ENCODE measurements at regions of chr22 and their contacts with region 1.

Region 1: GRCh38 chr22:19568337-19569275 is 44.4 kb upstream of the CLDN5 start:
- DNase-seq: peak in 2 of 4 experiments; percentile 25 to 33
- ATAC-seq: no peak
- H3K4me3 ChIP-seq: no peak overlapping the region
- H3K27ac ChIP-seq: no peak overlapping the region
- H3K4me1 ChIP-seq: peaks cover 0 to 8% of the 10 kb centered on the region in 2 experiments; a peak in 2 of 5 replicates
- H3K27me3 ChIP-seq: peaks cover 68 to 69% of the 10 kb centered on the region in 2 experiments
- CTCF ChIP-seq: no peak
- EP300 ChIP-seq: no peak
- POLR2A ChIP-seq: no peak
- RAD21 ChIP-seq: no peak

Region 2: GRCh38 chr22:19463496-19464469 is 104.8 kb before region 1 on chr22:
- CTCF ChIA-PET with region 1: no interaction called
- POLR2A ChIA-PET with region 1: no interaction called
- in situ Hi-C with region 1: no loop called
- intact Hi-C with region 1: no loop called
- DNase-seq: peak in 1 of 4 experiments; percentile 50
- ATAC-seq: peak; percentile 21
- H3K4me3 ChIP-seq: no peak overlapping the region
- H3K27ac ChIP-seq: no peak overlapping the region
- H3K4me1 ChIP-seq: no peaks in the 10 kb centered on the region
- H3K27me3 ChIP-seq: no peaks in the 10 kb centered on the region
- CTCF ChIP-seq: no peak
- EP300 ChIP-seq: no peak
- POLR2A ChIP-seq: no peak; the same call in 1 of the 2 replicates
- RAD21 ChIP-seq: 0 out of 4 replicates have a peak, but pooled peaks of 1 of the 2 experiments have one; percentile 13

Region 3: GRCh38 chr22:19554834-19555404 is 13.7 kb before region 1 on chr22:
- CTCF ChIA-PET with region 1: no interaction called
- POLR2A ChIA-PET with region 1: interaction called, 39 read pairs
- in situ Hi-C with region 1: no loop called
- intact Hi-C with region 1: no loop called
- DNase-seq: peak in 2 of 4 experiments; percentile 66 to 70
- ATAC-seq: peak; percentile 57
- H3K4me3 ChIP-seq: no peak overlapping the region
- H3K27ac ChIP-seq: no peak overlapping the region
- H3K4me1 ChIP-seq: no peaks in the 10 kb centered on the region; a peak in 1 of 5 replicates
- H3K27me3 ChIP-seq: peaks cover 56 to 65% of the 10 kb centered on the region in 2 experiments
- CTCF ChIP-seq: peak; percentile 30 to 32 (median 31); a peak in 3 of 6 replicates
- EP300 ChIP-seq: no peak
- POLR2A ChIP-seq: no peak
- RAD21 ChIP-seq: peak in 1 of 2 experiments; percentile 1; a peak in 1 of 4 replicates

Region 4: DNA sequence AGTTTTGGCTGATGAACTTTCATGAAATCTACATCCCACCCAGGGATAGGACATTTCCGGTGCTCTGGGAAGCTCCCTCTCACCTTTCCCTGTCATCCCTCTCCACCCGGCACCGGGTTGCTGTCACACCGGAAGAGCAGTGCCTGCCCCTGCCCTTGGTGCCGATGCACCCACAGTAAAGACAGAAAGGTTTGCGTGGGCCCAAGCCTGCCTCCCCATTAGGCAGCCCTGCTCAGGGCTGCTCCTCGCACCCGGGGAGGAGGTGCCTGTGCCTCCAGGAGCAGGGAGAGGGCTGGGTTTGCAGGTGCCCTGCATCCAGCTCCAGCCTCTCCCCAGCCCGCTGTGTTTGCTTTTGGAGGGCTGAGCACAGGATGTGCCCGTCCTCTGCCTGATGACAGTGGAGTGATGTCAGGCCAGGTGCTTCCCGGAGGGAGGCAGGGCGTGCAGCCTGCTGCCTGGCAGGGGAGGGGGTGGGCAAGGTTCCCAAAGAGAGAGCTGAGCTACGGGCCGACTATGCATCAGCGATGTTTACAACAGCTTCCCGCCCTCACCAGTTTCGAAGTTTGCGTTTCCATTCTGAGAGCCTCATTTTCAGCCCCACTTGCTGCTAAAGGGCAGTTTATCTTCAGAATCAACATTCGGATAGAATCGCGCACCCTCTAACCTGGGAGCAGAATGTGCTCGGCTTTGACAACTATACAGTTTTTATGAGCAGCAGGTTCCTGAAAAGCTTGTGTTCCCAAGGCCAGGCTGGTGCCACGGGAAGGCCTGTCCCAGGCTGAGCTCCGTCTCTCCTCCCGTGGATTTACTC is 38.8 kb after region 1 on chr22:
- CTCF ChIA-PET with region 1: no interaction called
- POLR2A ChIA-PET with region 1: no interaction called
- in situ Hi-C with region 1: no loop called
- intact Hi-C with region 1: no loop called
- DNase-seq: peak in 1 of 4 experiments; percentile 45
- ATAC-seq: peak; percentile 2; the same call in 1 of the 3 replicates
- H3K4me3 ChIP-seq: no peak overlapping the region
- H3K27ac ChIP-seq: no peak overlapping the region
- H3K4me1 ChIP-seq: peaks cover 9 to 22% of the 10 kb centered on the region in 2 experiments; a peak in 4 of 5 replicates
- H3K27me3 ChIP-seq: peaks cover 90 to 92% of the 10 kb centered on the region in 2 experiments
- CTCF ChIP-seq: no peak
- EP300 ChIP-seq: no peak
- POLR2A ChIP-seq: no peak
- RAD21 ChIP-seq: no peak

Region 5: GRCh38 chr22:19705181-19705934 is 136.8 kb after region 1 on chr22:
- CTCF ChIA-PET with region 1: no interaction called
- POLR2A ChIA-PET with region 1: no interaction called
- in situ Hi-C with region 1: no loop called
- intact Hi-C with region 1: no loop called
- DNase-seq: peak in 3 of 4 experiments; percentile 43 to 59 (median 47)
- ATAC-seq: peak; percentile 20
- H3K4me3 ChIP-seq: no peak overlapping the region
- H3K27ac ChIP-seq: no peak overlapping the region
- H3K4me1 ChIP-seq: peaks cover 3 to 36% of the 10 kb centered on the region in 2 experiments; a peak in 3 of 5 replicates
- H3K27me3 ChIP-seq: peaks cover 59 to 81% of the 10 kb centered on the region in 2 experiments
- CTCF ChIP-seq: peak; percentile 53 to 75 (median 65)
- EP300 ChIP-seq: no peak
- POLR2A ChIP-seq: no peak
- RAD21 ChIP-seq: peak in 1 of 2 experiments; percentile 37; a peak in 2 of 4 replicates

Measured in K562 (cell line).